ENCODE measurements at regions of chr3 and their contacts with region 1.

Region 1: DNA sequence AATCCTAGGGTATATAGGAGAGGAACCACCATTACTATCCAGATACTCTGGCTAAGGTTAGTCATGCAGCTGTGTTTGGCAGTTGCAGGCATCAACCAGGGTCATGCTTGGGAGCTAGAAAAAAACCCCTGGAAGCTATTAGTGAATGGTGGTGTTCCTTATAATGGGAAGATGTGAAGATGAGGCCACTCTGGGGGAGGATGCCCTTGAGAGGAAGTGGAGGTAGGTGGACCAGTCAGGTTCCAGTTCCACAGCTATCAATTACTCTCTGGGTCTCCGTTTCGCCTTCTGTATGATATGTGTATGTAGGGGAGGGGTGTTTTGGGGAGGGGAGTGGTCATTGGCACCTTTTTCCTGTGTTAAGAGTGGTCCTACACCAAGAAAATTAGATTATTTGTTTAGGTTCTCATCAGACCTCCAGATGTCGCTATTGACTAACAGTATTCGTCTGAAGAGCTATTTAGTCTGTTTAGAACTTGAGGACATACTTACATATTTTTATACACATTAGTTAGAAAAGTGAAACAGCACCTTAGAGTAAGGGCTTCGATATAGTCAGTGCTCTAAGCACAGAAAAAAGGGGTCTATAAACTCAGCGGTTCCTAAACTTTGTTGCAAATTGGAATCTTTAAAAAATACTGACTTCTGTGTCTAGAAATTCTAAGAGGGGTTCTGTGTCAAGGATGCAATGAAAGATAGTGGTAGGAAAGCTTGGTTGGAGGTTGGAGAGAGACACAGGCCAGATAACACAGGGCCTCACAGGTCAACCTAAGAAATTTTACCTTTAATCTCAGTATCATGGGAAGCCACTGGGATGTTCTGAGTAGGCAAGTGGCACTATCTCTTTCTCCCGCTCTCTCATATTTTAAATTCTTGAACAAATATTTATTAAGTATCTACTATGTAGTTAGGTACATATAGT is 9.1 kb upstream of the HPS3 start:
- DNase-seq: peak; percentile 26
- H3K4me3 ChIP-seq: no peak overlapping the region
- H3K27me3 ChIP-seq: no peaks in the 10 kb centered on the region
- CTCF ChIP-seq: peak; percentile 47; the same call in 1 of the 2 replicates

Region 2: GRCh38 chr3:149081772-149082171 is 38.5 kb before region 1 on chr3:
- CTCF ChIA-PET with region 1: no interaction called
- POLR2A ChIA-PET with region 1: no interaction called
- DNase-seq: no peak
- H3K4me3 ChIP-seq: no peak overlapping the region
- H3K27me3 ChIP-seq: no peaks in the 10 kb centered on the region
- CTCF ChIP-seq: no peak

Region 3: DNA sequence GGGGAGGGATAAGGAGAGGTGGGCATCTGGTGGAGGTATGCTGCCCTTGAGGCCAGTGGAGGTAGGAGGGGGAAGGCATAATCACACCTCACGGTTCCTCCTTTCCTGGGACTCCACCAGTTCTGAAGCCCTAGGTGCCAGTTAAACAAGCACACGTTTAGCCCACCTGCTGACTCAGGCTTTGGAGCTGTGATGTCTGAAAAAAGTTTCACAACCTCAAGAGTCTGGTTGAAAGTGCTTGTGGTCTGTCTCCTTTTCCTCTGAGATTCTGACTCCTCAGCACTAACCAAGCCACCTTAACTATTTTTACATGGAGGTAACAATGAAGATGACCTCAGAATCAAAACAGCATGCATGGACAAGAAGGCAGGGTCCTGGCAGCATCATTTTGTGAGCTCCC is 32.1 kb after region 1 on chr3:
- CTCF ChIA-PET with region 1: interaction called, 10 read pairs
- POLR2A ChIA-PET with region 1: no interaction called
- DNase-seq: no peak
- H3K4me3 ChIP-seq: no peak overlapping the region
- H3K27me3 ChIP-seq: no peaks in the 10 kb centered on the region
- CTCF ChIP-seq: no peak

Region 4: GRCh38 chr3:149273096-149273751 is 152.9 kb after region 1 on chr3:
- CTCF ChIA-PET with region 1: interaction called, 78 read pairs
- POLR2A ChIA-PET with region 1: no interaction called
- DNase-seq: peak; percentile 19
- H3K4me3 ChIP-seq: no peak overlapping the region
- H3K27me3 ChIP-seq: no peaks in the 10 kb centered on the region
- CTCF ChIP-seq: peak; percentile 88

Region 5: GRCh38 chr3:149333176-149333859 is 213.0 kb after region 1 on chr3 and contains the start of gene TM4SF18:
- CTCF ChIA-PET with region 1: interaction called, 12 read pairs
- POLR2A ChIA-PET with region 1: no interaction called
- DNase-seq: no peak
- H3K4me3 ChIP-seq: no peak within 1 kb of the TSS
- H3K27me3 ChIP-seq: no peaks in the 10 kb centered on the region
- CTCF ChIP-seq: no peak
- polyA plus RNA-seq, gene TM4SF18: 0.11 and 0.29 TPM in 2 replicates

Measured in BJ (cell line).